Cardiac septum (tissue), 1 donor: ENCODE measurements at regions of chr10 and their contacts with region 1.

Region 1: DNA sequence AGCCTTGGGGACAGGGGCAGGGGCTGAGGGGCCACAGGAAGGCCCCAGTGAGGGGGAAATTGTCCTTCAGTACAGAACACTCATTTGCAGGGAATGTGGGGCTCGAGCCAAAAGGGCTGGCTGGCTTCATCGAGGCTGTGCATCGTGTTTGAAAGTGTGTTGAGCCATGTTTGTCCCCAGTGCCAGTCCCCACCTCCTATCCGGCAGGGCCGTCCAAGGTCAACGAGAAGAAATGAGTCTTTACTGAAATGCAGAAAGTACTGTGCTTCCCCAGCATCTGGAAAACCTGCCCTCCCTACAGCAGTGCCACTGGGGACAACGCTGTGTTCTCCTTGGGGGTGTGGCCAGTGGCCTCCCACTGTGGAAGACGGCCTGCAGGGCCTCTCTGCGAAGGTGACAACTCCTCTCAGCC is 214.1 kb downstream of the KLF6 start:
- DNase-seq: no peak

Region 2: DNA sequence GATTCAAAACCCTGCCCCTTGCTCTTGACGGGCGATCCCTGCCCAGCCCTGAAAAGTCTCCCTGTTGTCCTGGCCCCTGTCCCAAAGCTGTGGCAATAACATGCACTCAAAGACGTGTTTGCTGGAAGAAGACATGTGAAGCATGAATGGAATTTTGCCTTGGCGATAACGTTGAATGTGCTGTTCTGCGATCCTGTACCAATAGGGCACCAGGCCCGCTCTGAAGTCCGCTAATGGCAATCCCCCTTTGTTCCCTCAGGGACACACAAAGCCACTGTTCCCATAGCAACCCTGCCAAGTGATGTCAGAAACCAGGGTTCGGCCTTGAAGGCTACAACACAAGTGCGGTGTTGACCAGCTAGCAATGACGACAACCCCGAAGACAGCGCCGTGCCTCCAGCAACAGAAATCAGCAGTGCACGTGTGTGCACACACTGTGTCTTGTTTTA is 70.4 kb before region 1 on chr10:
- intact Hi-C with region 1: loop called (anchors 5 kb)
- DNase-seq: peak; percentile 83